ENCODE measurements at regions of chr5 and their contacts with region 1.

Region 1: DNA sequence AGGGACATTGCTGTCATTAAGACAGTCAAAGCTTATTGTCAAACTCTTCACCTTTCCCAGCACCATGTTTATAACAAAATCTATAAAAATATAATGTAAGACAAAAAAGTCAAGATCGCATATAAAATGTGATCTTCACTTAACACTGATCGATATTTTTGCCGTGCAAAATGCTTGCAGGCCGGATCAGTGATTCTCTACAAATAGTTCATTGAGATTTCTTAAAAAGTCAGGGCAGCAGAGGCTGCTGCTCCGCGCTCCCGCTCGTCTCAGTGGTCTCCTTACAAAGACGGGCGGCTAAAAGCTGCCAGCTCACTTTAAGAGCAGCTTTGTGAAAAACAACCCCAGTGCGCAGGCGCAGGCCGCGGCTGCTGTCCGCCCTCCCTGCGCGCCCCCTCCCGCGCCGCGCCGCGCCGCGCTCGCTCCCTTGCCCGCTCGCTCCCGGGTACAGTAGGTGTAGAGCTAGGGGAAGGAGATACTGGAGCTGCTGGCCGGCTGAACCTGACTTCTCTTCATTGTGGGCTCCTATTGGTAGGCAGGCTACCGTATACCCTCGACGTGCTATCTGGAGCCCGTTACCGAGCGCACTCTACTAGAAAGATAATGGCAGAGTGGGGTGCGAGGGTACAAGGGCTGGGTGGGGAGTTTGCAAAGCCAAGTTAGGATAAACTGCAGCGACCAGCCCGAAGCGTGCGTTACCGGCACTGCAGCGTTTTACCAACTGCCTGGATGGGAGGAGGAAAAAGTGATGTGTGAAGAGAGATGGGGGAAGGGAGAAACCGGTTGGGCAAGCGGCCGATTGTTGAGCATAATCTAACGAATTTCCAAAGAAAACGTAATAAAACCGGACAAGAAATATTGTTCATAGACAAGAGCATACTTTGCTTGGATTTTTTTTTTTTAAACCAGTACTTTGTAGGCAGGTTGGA is at the start of gene ARRDC3:
- DNase-seq: peak; percentile 98
- H3K4me3 Mint-ChIP-seq: peak within 1 kb of the TSS; percentile 87
- H3K27ac Mint-ChIP-seq: peak within 1 kb of the TSS; percentile 97
- H3K4me1 Mint-ChIP-seq: peaks cover 24% of the 10 kb centered on the region
- H3K27me3 Mint-ChIP-seq: no peaks in the 10 kb centered on the region
- total RNA-seq, gene ARRDC3: 46.5 to 47.1 TPM

Region 2: GRCh38 chr5:90409318-90410177 is 973.7 kb before region 1 on chr5 and contains the start of gene CETN3:
- CTCF ChIA-PET with region 1: no interaction called
- POLR2A ChIA-PET with region 1: interaction called, 14 read pairs
- DNase-seq: peak; percentile 91
- H3K4me3 Mint-ChIP-seq: no peak within 1 kb of the TSS
- H3K27ac Mint-ChIP-seq: no peak within 1 kb of the TSS
- H3K4me1 Mint-ChIP-seq: peaks cover 19% of the 10 kb centered on the region
- H3K27me3 Mint-ChIP-seq: no peaks in the 10 kb centered on the region
- total RNA-seq, gene CETN3: 33.4 to 34.7 TPM

Region 3: DNA sequence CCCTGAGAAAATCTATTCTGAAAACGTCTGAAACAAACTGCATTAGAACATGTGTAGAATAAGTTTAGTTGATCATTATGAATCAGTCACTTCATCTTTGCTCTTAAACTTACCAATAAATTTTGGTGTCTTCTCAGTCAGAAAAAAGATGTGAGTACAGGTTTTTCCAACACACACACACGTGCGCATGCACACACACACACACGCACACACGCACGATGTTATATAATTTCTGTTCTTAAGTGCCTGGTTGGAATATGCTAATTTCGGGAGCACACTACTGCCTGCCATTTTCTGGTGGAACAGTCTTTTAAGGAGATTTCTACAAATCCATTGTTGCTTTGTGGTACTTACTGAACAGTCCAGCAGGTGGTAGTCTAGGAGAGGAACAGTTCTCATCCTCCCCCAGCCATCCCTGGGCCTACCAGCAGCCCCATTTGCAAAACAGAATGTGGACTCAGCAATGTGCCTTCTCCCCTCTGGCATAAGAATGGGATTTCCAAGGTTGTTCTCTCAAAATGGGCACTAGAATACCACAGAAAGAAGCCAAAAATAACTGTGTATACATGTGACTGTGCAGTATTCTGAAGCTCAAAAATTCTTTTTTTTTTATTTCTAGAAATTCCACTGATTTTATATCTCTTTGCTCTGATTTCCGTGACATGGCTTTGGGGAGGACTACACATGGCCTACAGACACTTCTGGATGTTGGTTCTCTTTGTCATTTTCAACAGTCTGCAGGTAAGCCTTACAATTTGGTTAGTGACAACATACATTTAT is 281.5 kb before region 1 on chr5:
- CTCF ChIA-PET with region 1: interaction called, 29 read pairs
- POLR2A ChIA-PET with region 1: interaction called, 5 read pairs
- DNase-seq: peak; percentile 58
- H3K4me3 Mint-ChIP-seq: no peak overlapping the region
- H3K27ac Mint-ChIP-seq: no peak overlapping the region
- H3K4me1 Mint-ChIP-seq: no peaks in the 10 kb centered on the region
- H3K27me3 Mint-ChIP-seq: peaks cover 19% of the 10 kb centered on the region

Region 4: GRCh38 chr5:91225848-91226686 is 157.2 kb before region 1 on chr5:
- CTCF ChIA-PET with region 1: interaction called, 243 read pairs
- POLR2A ChIA-PET with region 1: interaction called, 43 read pairs
- DNase-seq: peak; percentile 69
- H3K4me3 Mint-ChIP-seq: no peak overlapping the region
- H3K27ac Mint-ChIP-seq: no peak overlapping the region
- H3K4me1 Mint-ChIP-seq: no peaks in the 10 kb centered on the region
- H3K27me3 Mint-ChIP-seq: peaks cover 14% of the 10 kb centered on the region

Region 5: DNA sequence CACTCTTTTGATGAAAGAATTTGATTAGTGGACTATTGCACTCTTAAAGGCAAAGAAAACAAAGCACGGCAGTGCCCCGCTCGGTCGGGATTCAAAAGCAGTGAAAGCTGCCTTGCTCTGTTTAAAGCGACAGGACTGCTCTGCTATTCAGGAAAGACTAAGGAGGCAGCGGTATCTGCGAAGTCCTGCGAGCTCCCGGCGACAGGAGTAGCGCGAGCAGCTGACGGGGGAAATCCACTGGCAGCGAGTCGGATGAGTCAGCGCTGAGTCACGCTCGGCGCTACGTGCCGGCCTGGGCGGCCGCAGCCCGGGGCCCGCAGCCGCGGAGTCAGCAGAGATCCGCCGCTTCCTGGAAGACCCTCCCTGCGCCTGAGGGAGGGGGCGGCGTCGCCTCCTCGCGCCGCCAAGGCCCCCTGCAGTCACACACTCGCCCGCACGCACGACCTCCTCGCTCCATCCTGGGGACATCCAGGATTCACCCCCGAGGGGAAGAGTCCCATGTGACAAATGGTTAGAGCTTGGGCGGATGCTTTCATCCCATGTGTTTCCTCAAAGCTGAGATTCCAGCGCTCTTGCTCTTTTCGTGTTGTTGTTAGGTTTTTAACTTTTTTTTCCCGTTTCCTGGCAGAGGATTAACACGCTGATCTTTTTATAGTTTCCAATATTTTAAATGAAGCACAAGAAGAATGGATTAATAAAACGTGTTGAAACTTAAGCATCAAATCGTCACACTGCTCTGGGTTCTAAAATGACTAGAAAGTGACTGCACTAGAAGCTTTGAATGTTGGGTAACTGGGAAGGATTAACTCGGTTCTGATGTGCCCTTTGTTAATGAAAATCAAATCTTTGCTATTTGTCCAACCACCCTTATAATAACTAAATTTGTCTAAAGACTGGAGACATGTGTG is 102.7 kb before region 1 on chr5:
- CTCF ChIA-PET with region 1: interaction called, 30 read pairs
- POLR2A ChIA-PET with region 1: interaction called, 89 read pairs
- DNase-seq: peak; percentile 90
- H3K4me3 Mint-ChIP-seq: peak overlapping the region; percentile 73
- H3K27ac Mint-ChIP-seq: peak overlapping the region; percentile 88
- H3K4me1 Mint-ChIP-seq: peaks cover 34% of the 10 kb centered on the region
- H3K27me3 Mint-ChIP-seq: peaks cover 3% of the 10 kb centered on the region

Region 6: GRCh38 chr5:91332267-91333045 is 50.8 kb before region 1 on chr5:
- CTCF ChIA-PET with region 1: interaction called, 5 read pairs
- POLR2A ChIA-PET with region 1: interaction called, 46 read pairs
- DNase-seq: peak; percentile 50
- H3K4me3 Mint-ChIP-seq: no peak overlapping the region
- H3K27ac Mint-ChIP-seq: peak overlapping the region; percentile 61
- H3K4me1 Mint-ChIP-seq: peaks cover 36% of the 10 kb centered on the region
- H3K27me3 Mint-ChIP-seq: peaks cover 2% of the 10 kb centered on the region

Region 7: DNA sequence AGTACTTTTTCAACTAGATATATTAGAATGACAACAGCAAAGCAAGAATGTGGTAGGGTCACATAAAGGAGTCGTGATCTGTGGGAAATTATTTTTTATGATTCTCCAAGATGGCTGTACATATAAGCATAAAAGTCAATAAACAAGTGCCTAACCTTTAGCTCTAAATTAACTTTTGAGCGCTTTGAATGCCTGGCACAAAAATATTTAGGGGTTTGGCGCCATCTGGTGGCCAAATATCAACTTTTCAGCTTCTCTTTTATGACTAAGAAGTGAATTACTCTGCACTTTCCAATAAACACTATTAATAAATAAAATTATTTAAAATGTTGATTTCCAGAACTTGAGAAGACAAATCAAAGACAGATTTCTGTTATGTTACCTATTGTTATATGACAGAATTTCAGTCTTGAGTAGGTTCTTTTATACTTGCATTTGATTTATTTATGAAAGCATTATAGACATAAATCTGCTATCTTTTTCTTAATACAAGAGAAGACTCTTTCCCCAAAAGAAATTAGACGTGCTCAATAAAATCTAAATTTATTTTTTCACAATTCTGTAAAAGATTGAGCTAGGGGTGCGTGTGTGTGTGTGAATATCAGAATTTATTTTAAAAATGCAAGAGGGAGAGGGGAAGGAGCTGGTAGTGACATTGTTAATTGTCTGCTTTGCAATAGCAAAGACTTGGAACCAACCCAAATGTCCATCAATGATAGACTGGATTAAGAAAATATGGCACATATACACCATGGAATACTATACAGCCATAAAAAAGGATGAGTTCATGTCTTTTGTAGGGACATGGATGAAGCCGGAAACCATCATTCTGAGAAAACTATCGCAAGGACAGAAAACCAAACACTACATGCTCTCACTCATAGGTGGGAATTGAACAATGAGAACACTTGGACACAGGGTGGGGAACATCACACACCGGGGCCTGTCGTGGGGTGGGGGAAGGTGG is 36.6 kb after region 1 on chr5:
- CTCF ChIA-PET with region 1: interaction called, 123 read pairs
- POLR2A ChIA-PET with region 1: interaction called, 38 read pairs
- DNase-seq: peak; percentile 72
- H3K4me3 Mint-ChIP-seq: no peak overlapping the region
- H3K27ac Mint-ChIP-seq: no peak overlapping the region
- H3K4me1 Mint-ChIP-seq: peaks cover 9% of the 10 kb centered on the region
- H3K27me3 Mint-ChIP-seq: peaks cover 3% of the 10 kb centered on the region

Region 8: DNA sequence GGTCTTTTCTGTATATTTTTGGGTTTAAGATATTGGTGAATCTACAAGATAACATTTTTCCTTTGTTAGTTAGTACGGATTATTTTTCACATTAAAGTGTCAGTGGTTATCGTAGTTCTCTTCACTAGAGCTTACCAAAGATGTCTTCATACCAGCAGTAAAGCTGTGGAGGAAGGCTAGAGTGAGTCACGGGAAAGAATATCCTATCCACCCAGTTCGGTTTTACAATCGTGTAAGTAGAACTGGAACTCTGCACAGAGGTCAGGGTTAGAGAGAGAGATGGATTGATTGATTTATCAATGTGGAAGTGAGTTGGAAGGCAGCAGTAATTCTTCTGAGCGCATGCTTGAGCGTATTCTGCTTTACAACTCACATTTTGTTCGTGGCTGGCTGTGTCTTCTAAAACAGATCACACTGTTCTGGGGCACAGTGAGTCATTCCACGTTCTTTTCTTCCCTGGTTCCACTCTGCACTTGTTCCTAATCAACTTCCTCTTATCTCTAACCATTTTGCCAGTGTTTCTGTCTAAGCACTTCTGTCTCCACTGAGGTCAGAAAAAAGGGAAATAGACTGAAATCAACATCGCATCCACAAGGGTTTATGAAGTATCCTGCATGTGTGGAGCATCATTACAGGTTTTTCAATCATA is 86.3 kb after region 1 on chr5:
- CTCF ChIA-PET with region 1: no interaction called
- POLR2A ChIA-PET with region 1: no interaction called
- DNase-seq: no peak
- H3K4me3 Mint-ChIP-seq: no peak overlapping the region
- H3K27ac Mint-ChIP-seq: no peak overlapping the region
- H3K4me1 Mint-ChIP-seq: peaks cover 8% of the 10 kb centered on the region
- H3K27me3 Mint-ChIP-seq: peaks cover 1% of the 10 kb centered on the region

Region 9: DNA sequence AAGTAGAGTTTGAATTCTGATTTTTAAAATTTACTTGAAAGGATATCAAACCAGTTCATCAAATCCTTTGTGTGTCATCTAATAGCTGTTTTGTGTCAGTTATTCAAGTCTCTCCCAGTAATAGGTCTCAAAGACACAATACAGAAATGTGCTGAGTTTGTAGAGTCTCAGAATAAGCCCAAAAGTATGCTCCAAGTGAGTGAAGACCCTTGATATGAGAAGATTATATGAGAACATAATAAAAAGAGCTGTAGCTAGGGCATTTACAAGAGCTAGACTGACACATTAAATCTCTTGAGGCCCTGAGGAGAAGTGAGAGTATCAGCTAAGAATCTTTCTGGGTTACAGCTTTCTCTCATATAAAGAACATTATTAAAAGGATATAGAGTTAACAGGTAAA is 720.8 kb after region 1 on chr5:
- CTCF ChIA-PET with region 1: no interaction called
- POLR2A ChIA-PET with region 1: no interaction called
- DNase-seq: no peak
- H3K4me3 Mint-ChIP-seq: no peak overlapping the region
- H3K27ac Mint-ChIP-seq: no peak overlapping the region
- H3K4me1 Mint-ChIP-seq: no peaks in the 10 kb centered on the region
- H3K27me3 Mint-ChIP-seq: no peaks in the 10 kb centered on the region